ENCODE measurements at regions of chr6 and their contacts with region 1.

Region 1: DNA sequence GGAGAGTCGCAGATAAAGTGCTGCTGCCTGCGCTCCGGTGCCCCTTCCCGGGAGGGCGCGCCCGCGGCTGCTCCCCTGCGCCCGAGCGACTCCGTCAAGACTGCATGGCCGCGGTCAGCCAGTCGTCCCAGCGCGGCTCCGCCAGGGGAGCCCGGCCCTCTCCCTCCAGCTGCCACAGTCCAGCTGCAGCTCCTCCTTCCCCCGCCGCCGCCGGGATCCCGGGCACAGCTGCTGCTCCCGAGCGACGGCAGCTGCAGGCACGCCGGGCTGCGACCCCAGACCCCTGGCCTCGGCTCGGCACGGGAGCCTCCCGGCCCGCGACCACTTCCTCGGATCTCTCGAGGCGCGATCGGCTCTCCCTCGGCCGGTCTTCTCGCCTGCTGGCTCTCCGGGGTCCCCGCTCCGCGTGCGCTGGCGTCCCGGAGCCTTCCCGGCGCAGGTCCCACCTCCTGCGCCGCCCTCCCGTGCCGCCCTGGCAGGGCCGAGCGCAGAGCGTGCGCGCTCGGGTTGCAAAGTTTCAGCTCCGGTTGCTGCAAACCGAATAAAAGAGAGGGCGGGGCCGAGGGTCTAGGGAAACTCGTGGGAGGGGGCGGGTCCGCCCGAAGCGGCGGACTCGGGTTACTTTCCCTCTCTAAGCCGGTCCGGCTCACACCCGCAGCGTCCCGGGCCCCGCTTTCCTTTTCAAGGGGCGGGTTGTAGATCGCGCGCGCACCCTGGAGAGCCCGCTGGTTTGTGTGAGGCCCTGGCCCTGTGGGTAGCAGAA is at the start of gene CNKSR3:
- DNase-seq: peak; percentile 93 to 94 (median 93)
- H3K4me3 ChIP-seq: peak within 1 kb of the TSS; percentile 89
- H3K27ac ChIP-seq: peak within 1 kb of the TSS; percentile 76 to 90
- H3K4me1 ChIP-seq: peaks cover 13% of the 10 kb centered on the region
- H3K27me3 ChIP-seq: no peaks in the 10 kb centered on the region
- CTCF ChIP-seq: peak in 1 of 3 donors; percentile 21
- EP300 ChIP-seq: no peak
- POLR2A ChIP-seq: peak; percentile 55
- total RNA-seq, gene CNKSR3: 8.6 to 15.4 (median 12.8) TPM

Region 2: GRCh38 chr6:154410619-154411072 is 99.7 kb before region 1 on chr6:
- intact Hi-C with region 1: loop called in 1 of 4 experiments (anchors 10 kb)
- DNase-seq: peak; percentile 67 to 77 (median 70)
- H3K4me3 ChIP-seq: peak overlapping the region; percentile 5
- H3K27ac ChIP-seq: peak overlapping the region; percentile 71 to 81
- H3K4me1 ChIP-seq: peaks cover 9% of the 10 kb centered on the region
- H3K27me3 ChIP-seq: no peaks in the 10 kb centered on the region
- CTCF ChIP-seq: no peak
- EP300 ChIP-seq: no peak
- POLR2A ChIP-seq: no peak

Region 3: GRCh38 chr6:154494592-154495311 is 15.6 kb before region 1 on chr6:
- intact Hi-C with region 1: no loop called
- DNase-seq: no peak
- H3K4me3 ChIP-seq: no peak overlapping the region
- H3K27ac ChIP-seq: no peak overlapping the region
- H3K4me1 ChIP-seq: peaks cover 4% of the 10 kb centered on the region
- H3K27me3 ChIP-seq: no peaks in the 10 kb centered on the region
- CTCF ChIP-seq: no peak
- EP300 ChIP-seq: no peak
- POLR2A ChIP-seq: no peak

Measured in ovary (tissue), 10 donors.